WTC11 (cell line): ENCODE measurements at regions of chr16 and their contacts with region 1.

Region 1: GRCh38 chr16:19446300-19446846 is 28.7 kb downstream of the TMC5 start:
- DNase-seq: no peak
- ATAC-seq: no peak
- H3K4me3 Mint-ChIP-seq: no peak overlapping the region
- H3K27ac Mint-ChIP-seq: no peak overlapping the region
- H3K4me1 Mint-ChIP-seq: 0 out of 2 replicates have a peak, but pooled peaks cover 3% of the 10 kb centered on the region
- H3K27me3 Mint-ChIP-seq: no peaks in the 10 kb centered on the region
- CTCF ChIP-seq: no peak

Region 2: GRCh38 chr16:19458718-19459379 is 12.5 kb after region 1 on chr16:
- CTCF ChIA-PET with region 1: interaction called, 11 read pairs
- POLR2A ChIA-PET with region 1: no interaction called
- DNase-seq: no peak
- ATAC-seq: peak; percentile 77
- H3K4me3 Mint-ChIP-seq: no peak overlapping the region
- H3K27ac Mint-ChIP-seq: peak overlapping the region; percentile 70
- H3K4me1 Mint-ChIP-seq: peaks cover 7% of the 10 kb centered on the region
- H3K27me3 Mint-ChIP-seq: no peaks in the 10 kb centered on the region; the same call in 1 of the 2 replicates
- CTCF ChIP-seq: no peak

Region 3: GRCh38 chr16:19578378-19578971 is 132.1 kb after region 1 on chr16:
- CTCF ChIA-PET with region 1: no interaction called
- POLR2A ChIA-PET with region 1: no interaction called
- DNase-seq: no peak
- ATAC-seq: no peak
- H3K4me3 Mint-ChIP-seq: no peak overlapping the region
- H3K27ac Mint-ChIP-seq: no peak overlapping the region
- H3K4me1 Mint-ChIP-seq: no peaks in the 10 kb centered on the region
- H3K27me3 Mint-ChIP-seq: no peaks in the 10 kb centered on the region
- CTCF ChIP-seq: no peak